GM13976 (cell line): ENCODE measurements at regions of chr5 and their contacts with region 1.

Region 1: GRCh38 chr5:169583424-169584204 is at the start of gene SPDL1:
- DNase-seq: peak; percentile 94
- CTCF ChIP-seq: no peak

Region 2: GRCh38 chr5:168987543-168988300 is 595.9 kb before region 1 on chr5:
- in situ Hi-C with region 1: loop called (anchors 25 kb)
- DNase-seq: peak; percentile 63
- CTCF ChIP-seq: peak; percentile 80

Region 3: GRCh38 chr5:169050146-169050571 is 533.5 kb before region 1 on chr5:
- in situ Hi-C with region 1: no loop called
- DNase-seq: no peak
- CTCF ChIP-seq: no peak